Colonic mucosa (tissue), 4 donors: ENCODE measurements at regions of chr14 and their contacts with region 1.

Region 1: GRCh38 chr14:91901449-91902226 is 34.3 kb upstream of the TC2N start:
- DNase-seq: no peak
- H3K4me3 ChIP-seq: no peak overlapping the region
- H3K27ac ChIP-seq: no peak overlapping the region
- H3K4me1 ChIP-seq: peaks cover 2% of the 10 kb centered on the region
- H3K27me3 ChIP-seq: no peaks in the 10 kb centered on the region
- CTCF ChIP-seq: no peak

Region 2: GRCh38 chr14:91649930-91650329 is 251.7 kb before region 1 on chr14:
- intact Hi-C with region 1: loop called (anchors 5 kb)
- DNase-seq: peak; percentile 22
- H3K4me3 ChIP-seq: no peak overlapping the region
- H3K27ac ChIP-seq: no peak overlapping the region
- H3K4me1 ChIP-seq: no peaks in the 10 kb centered on the region
- H3K27me3 ChIP-seq: no peaks in the 10 kb centered on the region
- CTCF ChIP-seq: peak; percentile 56

Region 3: DNA sequence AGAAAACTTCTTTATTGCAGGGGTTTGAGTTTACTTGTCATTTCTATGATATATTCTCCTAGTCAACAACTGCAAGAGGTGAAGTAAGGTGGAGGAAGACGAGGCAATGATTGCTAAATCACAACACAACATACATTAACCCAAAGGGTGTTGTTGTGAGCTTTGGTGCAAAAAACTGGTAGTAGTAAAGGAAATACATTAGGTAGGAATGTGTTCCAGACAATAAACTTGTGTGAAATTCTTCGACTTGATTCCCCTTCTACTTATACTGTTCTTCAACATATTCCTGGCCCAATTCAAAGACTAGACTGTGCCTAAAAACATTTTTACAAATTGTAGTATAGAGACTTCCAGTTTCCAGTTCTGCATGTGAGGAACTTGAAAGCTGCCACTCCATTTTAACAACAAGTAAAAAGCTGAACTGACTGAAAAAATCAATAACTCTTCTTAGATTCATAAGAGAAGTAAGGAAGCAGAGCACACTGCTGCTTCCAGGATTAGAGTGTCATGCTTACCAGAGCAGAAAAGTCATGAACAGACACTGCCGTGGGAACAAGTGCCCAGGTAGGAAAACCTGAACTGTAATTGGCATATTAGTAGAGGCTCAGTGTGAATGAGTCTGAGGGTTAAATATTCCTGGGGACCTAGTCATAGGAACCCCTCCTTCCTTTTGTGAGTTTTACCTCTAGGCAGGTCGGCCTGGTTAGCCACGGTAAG is 1467.5 kb after region 1 on chr14:
- intact Hi-C with region 1: no loop called
- DNase-seq: no peak
- H3K4me3 ChIP-seq: no peak overlapping the region
- H3K27ac ChIP-seq: no peak overlapping the region
- H3K4me1 ChIP-seq: no peaks in the 10 kb centered on the region
- H3K27me3 ChIP-seq: no peaks in the 10 kb centered on the region
- CTCF ChIP-seq: no peak